Activated CD8-positive, alpha-beta T cell treated with anti-CD3 and anti-CD28 coated beads, Interleukin-2, amount 10 ng/mL, durations not matched to agents 7 days and 5 days (primary cell): ENCODE measurements at regions of chr7 and their contacts with region 1.

Region 1: DNA sequence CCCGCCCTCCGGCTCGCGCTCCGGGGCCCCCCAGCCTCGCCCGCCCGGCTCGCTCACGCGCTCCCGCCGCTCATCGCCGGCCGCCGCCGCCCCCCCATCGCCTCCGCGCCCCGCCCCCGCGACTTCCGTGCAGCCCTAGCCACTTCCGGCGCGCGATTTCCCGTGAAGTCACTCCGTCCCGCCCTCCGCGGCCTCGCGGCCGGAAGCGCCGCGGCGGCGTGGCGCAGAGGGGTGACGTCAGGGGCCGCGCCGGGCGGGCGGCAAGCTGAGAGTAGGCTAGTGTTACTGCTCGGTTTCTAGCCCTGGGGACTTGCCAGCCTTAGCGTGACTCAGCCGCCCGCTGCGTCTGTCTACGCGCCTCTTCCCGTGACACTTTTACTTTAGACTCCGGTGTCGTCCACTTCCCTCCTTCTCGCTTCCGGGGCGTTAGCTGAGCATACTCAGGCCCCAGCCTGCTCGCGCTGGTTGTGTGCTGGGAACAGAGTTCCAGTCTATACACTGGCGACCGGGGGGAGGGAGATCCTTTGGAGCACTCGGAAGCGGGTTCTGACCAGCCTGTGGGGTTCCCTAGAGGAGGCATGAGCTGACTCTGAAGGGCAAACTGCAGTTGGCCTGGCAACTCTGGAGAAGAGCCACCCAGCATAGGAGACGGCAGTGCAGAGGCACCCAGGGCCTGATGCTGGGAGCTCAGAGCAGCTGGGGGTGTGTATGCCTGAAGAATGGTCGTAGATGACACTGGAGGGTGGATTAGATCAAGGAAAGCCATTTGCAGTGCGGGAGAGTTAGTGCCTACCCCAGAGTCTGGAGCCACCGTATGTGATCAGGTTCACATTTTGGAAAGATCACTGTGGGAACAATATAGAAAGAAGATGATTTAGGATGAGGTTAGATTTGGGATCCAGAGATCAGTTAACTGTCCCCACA is at the start of gene PURB:
- DNase-seq: peak; percentile 96
- ATAC-seq: peak; percentile 91
- H3K4me3 Mint-ChIP-seq: peak within 1 kb of the TSS; percentile 88
- H3K27ac Mint-ChIP-seq: peak within 1 kb of the TSS; percentile 98
- H3K4me1 Mint-ChIP-seq: peaks cover 57% of the 10 kb centered on the region
- H3K27me3 Mint-ChIP-seq: no peaks in the 10 kb centered on the region
- total RNA-seq, gene PURB: 26.8 to 28.0 TPM

Region 2: GRCh38 chr7:44573464-44574286 is 312.0 kb before region 1 on chr7 and contains the start of gene DDX56:
- CTCF ChIA-PET with region 1: no interaction called
- POLR2A ChIA-PET with region 1: interaction called, 15 read pairs
- DNase-seq: peak; percentile 96
- ATAC-seq: peak; percentile 95
- H3K4me3 Mint-ChIP-seq: peak within 1 kb of the TSS; percentile 99
- H3K27ac Mint-ChIP-seq: peak within 1 kb of the TSS; percentile 96
- H3K4me1 Mint-ChIP-seq: peaks cover 38% of the 10 kb centered on the region
- H3K27me3 Mint-ChIP-seq: no peaks in the 10 kb centered on the region
- total RNA-seq, gene DDX56: 83.6 to 86.5 TPM

Region 3: DNA sequence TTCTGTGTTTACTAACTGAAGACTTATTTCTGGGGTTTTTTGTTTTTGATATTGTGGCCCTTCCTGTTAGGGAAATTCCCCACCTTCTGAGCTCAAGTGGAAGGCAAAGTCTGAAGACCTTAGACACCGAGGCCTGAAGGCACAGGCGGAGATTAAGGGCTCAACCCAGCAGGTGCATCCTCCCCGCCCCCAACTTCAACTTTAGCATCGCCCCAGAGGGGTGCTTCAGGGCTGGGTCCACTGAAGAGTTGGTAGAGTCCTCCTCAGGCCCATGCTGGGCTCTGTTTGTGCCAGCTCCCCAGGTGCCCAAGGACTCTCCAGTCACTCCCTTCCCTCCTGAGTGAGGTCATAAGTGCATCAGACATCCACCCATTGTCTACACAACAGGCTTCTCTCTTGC is 98.6 kb before region 1 on chr7:
- CTCF ChIA-PET with region 1: no interaction called
- POLR2A ChIA-PET with region 1: no interaction called
- DNase-seq: no peak
- ATAC-seq: no peak
- H3K4me3 Mint-ChIP-seq: no peak overlapping the region
- H3K27ac Mint-ChIP-seq: no peak overlapping the region
- H3K4me1 Mint-ChIP-seq: no peaks in the 10 kb centered on the region
- H3K27me3 Mint-ChIP-seq: no peaks in the 10 kb centered on the region

Region 4: DNA sequence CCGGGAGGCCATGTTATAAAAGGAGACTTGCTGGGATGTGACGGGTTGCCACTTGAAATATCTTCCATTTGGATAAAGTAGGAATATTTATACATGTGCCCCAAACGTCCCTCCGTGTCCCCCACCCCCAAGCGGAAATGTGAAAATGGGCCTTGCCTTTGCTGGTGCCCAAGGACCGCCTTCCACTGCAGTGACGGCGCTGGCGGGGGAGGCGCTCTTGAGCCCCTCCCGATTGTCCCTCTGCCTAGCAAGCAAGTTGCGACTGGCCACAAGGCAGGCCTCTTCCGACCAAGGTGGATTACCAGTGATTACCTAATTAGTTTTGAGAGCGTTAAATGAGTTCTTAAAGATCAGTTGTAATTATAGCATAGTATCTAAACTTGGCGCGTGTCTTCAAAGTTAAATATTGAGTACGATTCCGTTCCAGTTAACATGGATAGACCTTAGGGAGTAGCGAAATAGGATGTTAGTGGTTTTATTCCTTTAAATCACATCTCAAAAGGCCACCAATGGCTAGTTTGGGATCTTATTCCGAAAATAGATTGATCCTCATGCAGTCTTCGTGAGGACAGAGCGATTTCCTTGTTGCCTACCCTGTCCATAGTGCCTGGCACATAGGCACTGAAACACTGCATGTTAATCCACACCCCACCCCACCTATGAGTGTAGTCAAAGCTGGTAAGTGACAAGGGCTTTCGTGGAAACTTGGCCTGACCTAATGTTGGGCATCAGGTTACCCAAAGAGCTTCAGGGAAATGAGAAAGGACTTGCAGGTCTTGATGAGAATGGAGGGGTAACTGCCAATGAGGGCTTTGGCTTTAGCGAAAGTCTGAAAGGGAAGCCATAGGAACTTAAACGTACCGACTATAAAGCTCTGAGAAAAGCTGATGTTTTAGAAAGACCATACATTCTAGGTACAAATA is 88.1 kb before region 1 on chr7:
- CTCF ChIA-PET with region 1: interaction called, 3 read pairs
- POLR2A ChIA-PET with region 1: interaction called, 12 read pairs
- DNase-seq: peak; percentile 91
- ATAC-seq: peak; percentile 54
- H3K4me3 Mint-ChIP-seq: peak overlapping the region; percentile 94
- H3K27ac Mint-ChIP-seq: peak overlapping the region; percentile 98
- H3K4me1 Mint-ChIP-seq: peaks cover 36% of the 10 kb centered on the region
- H3K27me3 Mint-ChIP-seq: no peaks in the 10 kb centered on the region

Region 5: DNA sequence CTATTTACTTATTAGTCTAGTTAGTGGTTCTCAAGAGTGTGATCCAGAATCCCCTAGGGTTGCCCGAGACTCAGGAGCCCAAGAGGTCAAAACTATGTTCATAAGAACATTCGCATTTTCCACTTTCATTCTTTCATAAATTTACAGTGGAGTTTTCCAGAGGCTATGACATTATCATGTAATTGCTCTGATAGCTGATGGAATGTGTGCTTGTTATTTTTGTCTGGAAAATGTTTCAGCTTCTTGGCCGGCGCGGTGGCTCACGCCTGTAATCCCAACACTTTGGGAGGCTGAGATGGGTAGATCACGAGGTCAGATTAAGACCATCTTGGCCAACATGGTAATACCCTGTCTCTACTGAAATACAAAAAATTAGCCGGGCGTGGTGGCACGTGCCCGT is 10.4 kb before region 1 on chr7:
- CTCF ChIA-PET with region 1: interaction called, 6 read pairs
- POLR2A ChIA-PET with region 1: interaction called, 14 read pairs
- DNase-seq: no peak
- ATAC-seq: no peak
- H3K4me3 Mint-ChIP-seq: no peak overlapping the region
- H3K27ac Mint-ChIP-seq: no peak overlapping the region
- H3K4me1 Mint-ChIP-seq: peaks cover 17% of the 10 kb centered on the region
- H3K27me3 Mint-ChIP-seq: no peaks in the 10 kb centered on the region

Region 6: GRCh38 chr7:44921607-44922359 is 36.1 kb after region 1 on chr7:
- CTCF ChIA-PET with region 1: interaction called, 26 read pairs
- POLR2A ChIA-PET with region 1: interaction called, 25 read pairs
- DNase-seq: peak; percentile 97
- ATAC-seq: peak; percentile 98
- H3K4me3 Mint-ChIP-seq: no peak overlapping the region
- H3K27ac Mint-ChIP-seq: peak overlapping the region; percentile 39
- H3K4me1 Mint-ChIP-seq: peaks cover 25% of the 10 kb centered on the region
- H3K27me3 Mint-ChIP-seq: peaks cover 7% of the 10 kb centered on the region

Region 7: GRCh38 chr7:45007571-45008328 is 122.1 kb after region 1 on chr7:
- CTCF ChIA-PET with region 1: no interaction called
- POLR2A ChIA-PET with region 1: no interaction called
- DNase-seq: peak; percentile 53
- ATAC-seq: peak; percentile 63
- H3K4me3 Mint-ChIP-seq: peak overlapping the region; percentile 27
- H3K27ac Mint-ChIP-seq: peak overlapping the region; percentile 79
- H3K4me1 Mint-ChIP-seq: peaks cover 56% of the 10 kb centered on the region
- H3K27me3 Mint-ChIP-seq: no peaks in the 10 kb centered on the region

Region 8: DNA sequence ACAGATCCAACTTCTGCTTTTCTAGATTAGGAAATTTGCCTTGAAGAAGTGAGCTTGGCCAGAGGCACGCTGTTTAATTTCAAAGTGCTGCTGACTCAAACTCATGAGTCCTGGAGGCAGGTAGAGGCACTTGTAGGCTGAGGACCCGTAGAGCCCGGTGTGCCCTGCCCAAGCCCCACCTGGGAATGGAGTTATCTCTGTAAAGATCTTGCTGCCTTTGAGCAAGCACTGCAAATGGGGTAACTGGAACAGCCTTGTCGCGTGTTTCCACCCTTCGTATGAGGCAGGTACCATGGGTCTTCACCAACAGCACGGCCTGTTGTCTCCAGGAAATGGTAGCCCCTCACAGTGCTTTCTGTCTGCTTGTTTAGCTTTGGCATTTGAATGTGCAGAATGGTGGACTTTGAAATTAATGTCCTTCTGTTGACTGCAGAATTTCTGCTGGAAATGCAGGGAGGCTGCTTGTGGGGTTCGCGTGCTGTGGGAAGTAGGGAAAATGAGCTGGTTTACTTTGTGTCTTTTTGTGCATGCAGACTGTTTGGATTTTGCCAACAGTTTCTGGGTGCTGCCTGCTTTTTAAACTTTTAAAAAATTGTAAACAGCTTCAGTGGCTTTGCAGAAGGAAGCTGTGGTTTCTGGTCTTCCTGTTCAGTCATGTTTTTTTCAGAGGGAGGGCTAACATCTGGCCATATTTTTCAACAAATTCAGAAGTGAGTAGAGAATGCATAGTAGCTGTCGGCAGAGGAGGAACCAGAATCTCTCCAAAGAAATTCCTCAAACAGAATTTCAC is 141.5 kb after region 1 on chr7:
- CTCF ChIA-PET with region 1: no interaction called
- POLR2A ChIA-PET with region 1: interaction called, 14 read pairs
- DNase-seq: peak; percentile 56
- ATAC-seq: peak; percentile 57
- H3K4me3 Mint-ChIP-seq: peak overlapping the region; percentile 80
- H3K27ac Mint-ChIP-seq: peak overlapping the region; percentile 84
- H3K4me1 Mint-ChIP-seq: peaks cover 67% of the 10 kb centered on the region
- H3K27me3 Mint-ChIP-seq: no peaks in the 10 kb centered on the region